Caco-2 (cell line): ENCODE measurements at regions of chr7 and their contacts with region 1.

Region 1: DNA sequence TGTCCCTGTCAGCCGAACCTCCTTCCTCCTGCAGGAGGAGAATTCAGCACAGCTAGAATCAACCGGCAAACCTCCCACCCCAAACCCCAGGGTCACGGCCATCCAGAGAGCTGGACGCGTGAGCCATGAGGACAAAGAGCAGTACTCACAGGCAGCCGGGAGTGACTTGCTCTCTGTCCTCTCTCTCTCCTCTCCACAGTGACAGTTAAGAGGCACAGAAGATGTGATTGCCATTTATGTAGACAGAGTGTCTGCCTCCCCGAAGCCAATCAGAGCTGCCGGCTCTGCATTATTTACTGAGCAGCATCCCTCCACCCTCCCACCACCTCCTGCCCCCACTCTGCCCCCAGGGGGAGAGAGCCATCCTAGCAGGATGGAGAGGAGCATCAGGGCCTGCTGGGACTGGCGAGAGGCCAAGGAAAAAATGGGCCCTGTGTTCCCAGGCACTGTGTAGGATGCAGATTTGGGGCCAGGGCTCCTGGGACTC is 4.3 kb downstream of the DDC start:
- DNase-seq: no peak
- H3K4me3 ChIP-seq: no peak overlapping the region
- H3K4me3 Mint-ChIP-seq: no peak overlapping the region
- H3K27ac Mint-ChIP-seq: no peak overlapping the region
- H3K4me1 ChIP-seq: peaks cover 46% of the 10 kb centered on the region
- H3K4me1 Mint-ChIP-seq: peaks cover 56% of the 10 kb centered on the region
- H3K27me3 ChIP-seq: no peaks in the 10 kb centered on the region
- H3K27me3 Mint-ChIP-seq: no peaks in the 10 kb centered on the region
- CTCF ChIP-seq: no peak

Region 2: DNA sequence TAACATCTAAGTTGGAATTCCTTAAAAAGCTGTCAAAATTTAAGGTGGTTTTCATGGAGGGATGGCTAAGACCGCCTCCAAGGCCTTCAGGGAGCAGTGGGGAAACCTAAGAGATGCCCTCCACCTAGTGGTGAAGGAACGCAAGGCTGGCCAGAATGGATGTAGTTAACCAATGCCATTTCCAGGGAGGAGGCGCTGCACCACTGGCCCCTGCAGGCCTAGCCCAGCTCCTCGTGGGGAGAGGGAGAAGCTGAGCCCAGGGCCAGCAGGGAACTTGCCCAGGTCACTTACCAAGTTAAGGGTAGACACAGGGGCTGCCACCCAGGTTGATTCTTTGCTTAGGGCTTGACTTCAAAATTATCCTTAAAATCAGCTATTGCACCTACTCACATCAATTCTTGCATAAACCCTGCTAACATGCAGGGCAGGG is 142.8 kb before region 1 on chr7:
- CTCF ChIA-PET with region 1: no interaction called
- POLR2A ChIA-PET with region 1: no interaction called
- intact Hi-C with region 1: no loop called
- DNase-seq: peak; percentile 86 to 89
- H3K4me3 ChIP-seq: no peak overlapping the region
- H3K4me3 Mint-ChIP-seq: no peak overlapping the region
- H3K27ac Mint-ChIP-seq: no peak overlapping the region
- H3K4me1 ChIP-seq: no peaks in the 10 kb centered on the region; the same call in 1 of the 2 replicates
- H3K4me1 Mint-ChIP-seq: peaks cover 2% of the 10 kb centered on the region
- H3K27me3 ChIP-seq: no peaks in the 10 kb centered on the region
- H3K27me3 Mint-ChIP-seq: no peaks in the 10 kb centered on the region
- CTCF ChIP-seq: peak; percentile 88 to 97

Region 3: DNA sequence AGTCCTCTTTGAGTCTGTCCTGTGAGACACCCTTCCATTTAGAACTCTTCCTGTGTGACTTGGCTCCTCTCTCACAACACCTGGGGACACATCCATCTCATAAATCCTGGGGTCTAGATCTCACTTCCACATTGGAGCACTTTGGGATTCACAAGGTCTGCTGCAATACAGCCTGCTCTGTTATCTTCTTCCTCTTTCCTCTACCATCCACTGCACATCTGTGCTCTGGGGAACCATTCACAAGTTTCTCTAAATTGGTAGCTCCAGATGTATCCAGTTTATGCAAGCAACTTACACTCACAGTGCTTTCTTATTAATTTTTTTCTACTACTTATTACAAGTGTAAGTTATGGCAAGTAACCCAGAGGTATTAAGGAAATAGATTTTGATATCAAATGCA is 105.2 kb before region 1 on chr7:
- CTCF ChIA-PET with region 1: no interaction called
- POLR2A ChIA-PET with region 1: no interaction called
- intact Hi-C with region 1: no loop called
- DNase-seq: no peak
- H3K4me3 ChIP-seq: no peak overlapping the region
- H3K4me3 Mint-ChIP-seq: no peak overlapping the region
- H3K27ac Mint-ChIP-seq: no peak overlapping the region
- H3K4me1 ChIP-seq: 0 out of 2 replicates have a peak, but pooled peaks cover 3% of the 10 kb centered on the region
- H3K4me1 Mint-ChIP-seq: no peaks in the 10 kb centered on the region
- H3K27me3 ChIP-seq: no peaks in the 10 kb centered on the region
- H3K27me3 Mint-ChIP-seq: no peaks in the 10 kb centered on the region
- CTCF ChIP-seq: no peak

Region 4: DNA sequence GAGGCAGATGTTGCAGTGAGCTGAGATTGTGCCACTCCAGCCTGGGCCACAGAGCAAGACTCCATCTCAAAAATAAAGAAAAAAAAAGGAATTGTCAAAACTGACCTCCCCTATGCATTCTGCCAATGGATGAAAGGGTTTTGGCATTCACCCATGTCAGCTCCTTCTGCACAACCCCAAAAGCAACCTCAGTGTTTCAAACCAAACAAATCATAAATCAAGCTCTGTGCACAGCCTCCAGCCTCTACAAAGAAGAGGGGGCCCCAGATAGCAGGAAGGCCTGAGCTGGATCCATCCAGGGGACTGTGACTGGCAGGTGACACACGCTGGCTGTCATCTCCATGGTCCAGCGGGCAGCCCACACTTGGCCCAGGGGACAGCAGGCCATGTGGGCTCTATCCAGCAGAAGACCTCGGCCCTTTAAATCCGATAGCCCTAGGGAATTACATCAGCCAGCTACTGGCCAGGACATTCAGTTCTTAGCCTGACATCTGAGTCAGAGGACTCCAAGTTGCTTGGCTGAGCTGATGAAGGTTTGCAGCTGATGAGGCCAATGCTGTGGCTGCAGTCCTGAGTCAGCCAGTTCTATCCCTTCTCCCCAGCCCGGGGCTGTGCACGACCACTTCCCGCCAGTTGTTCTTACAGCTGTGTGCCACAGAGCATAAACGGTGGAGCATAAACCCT is 58.8 kb before region 1 on chr7:
- CTCF ChIA-PET with region 1: no interaction called
- POLR2A ChIA-PET with region 1: no interaction called
- intact Hi-C with region 1: no loop called
- DNase-seq: no peak
- H3K4me3 ChIP-seq: no peak overlapping the region
- H3K4me3 Mint-ChIP-seq: no peak overlapping the region
- H3K27ac Mint-ChIP-seq: no peak overlapping the region
- H3K4me1 ChIP-seq: no peaks in the 10 kb centered on the region; the same call in 1 of the 2 replicates
- H3K4me1 Mint-ChIP-seq: peaks cover 11% of the 10 kb centered on the region
- H3K27me3 ChIP-seq: no peaks in the 10 kb centered on the region
- H3K27me3 Mint-ChIP-seq: no peaks in the 10 kb centered on the region
- CTCF ChIP-seq: no peak

Region 5: DNA sequence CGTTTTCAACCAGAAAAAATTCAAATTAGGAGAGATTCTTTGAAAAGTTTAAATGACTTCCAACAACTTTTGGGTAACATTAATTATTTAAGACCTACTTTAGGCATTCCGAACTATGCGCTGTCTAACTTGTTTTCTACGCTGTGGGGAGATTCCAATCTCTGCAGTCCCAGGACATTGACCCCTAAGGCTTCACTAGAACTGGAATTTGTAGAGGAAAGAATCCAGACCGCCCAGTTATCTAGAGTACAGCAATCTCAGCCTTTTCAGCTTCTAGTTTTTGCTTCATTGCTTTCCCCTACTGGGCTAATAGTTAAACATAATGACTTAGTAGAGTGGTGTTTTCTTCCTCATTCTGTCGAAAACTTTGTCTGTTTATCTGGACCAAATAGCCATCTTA is 19.1 kb after region 1 on chr7:
- CTCF ChIA-PET with region 1: interaction called, 3 read pairs
- POLR2A ChIA-PET with region 1: no interaction called
- intact Hi-C with region 1: loop called (anchors 2 kb)
- DNase-seq: peak in 1 of 2 experiments; percentile 53
- H3K4me3 ChIP-seq: no peak overlapping the region
- H3K4me3 Mint-ChIP-seq: peak overlapping the region; percentile 55
- H3K27ac Mint-ChIP-seq: peak overlapping the region; percentile 35
- H3K4me1 ChIP-seq: peaks cover 13% of the 10 kb centered on the region
- H3K4me1 Mint-ChIP-seq: peaks cover 33% of the 10 kb centered on the region
- H3K27me3 ChIP-seq: no peaks in the 10 kb centered on the region
- H3K27me3 Mint-ChIP-seq: no peaks in the 10 kb centered on the region
- CTCF ChIP-seq: no peak

Region 6: DNA sequence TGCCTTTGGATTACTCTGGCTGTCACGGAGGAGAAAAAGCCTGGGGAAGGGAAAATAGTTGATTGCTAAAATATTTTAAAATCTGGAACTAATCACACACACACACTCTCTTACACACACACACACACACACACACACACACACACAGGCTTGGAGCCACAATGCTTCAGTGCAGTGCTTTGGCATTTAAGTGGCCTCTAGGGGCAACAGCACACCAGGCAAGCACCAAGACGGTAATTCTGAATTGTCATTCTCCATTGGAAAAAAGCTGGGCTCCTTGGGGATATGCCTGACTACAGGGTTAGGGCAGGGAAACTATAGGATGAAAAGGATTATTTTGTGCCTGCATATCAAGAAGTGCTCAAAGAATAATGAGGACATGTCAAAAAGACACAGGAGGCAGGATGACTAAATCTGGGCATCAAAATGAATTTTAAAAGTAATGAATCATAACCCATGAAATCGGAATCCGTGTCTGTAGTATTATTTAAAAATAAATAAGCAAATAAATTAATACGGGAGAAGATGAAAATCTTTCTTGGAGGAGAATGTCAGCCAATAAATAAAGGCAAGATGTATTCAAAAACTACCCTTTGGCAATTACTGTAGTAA is 34.7 kb after region 1 on chr7:
- CTCF ChIA-PET with region 1: no interaction called
- POLR2A ChIA-PET with region 1: no interaction called
- intact Hi-C with region 1: loop called (anchors 1 kb)
- DNase-seq: peak; percentile 53 to 57
- H3K4me3 ChIP-seq: no peak overlapping the region
- H3K4me3 Mint-ChIP-seq: no peak overlapping the region
- H3K27ac Mint-ChIP-seq: no peak overlapping the region
- H3K4me1 ChIP-seq: no peaks in the 10 kb centered on the region
- H3K4me1 Mint-ChIP-seq: peaks cover 6% of the 10 kb centered on the region
- H3K27me3 ChIP-seq: no peaks in the 10 kb centered on the region
- H3K27me3 Mint-ChIP-seq: no peaks in the 10 kb centered on the region
- CTCF ChIP-seq: peak; percentile 27 to 67